ENCODE measurements at regions of chr20 and their contacts with region 1.

Region 1: DNA sequence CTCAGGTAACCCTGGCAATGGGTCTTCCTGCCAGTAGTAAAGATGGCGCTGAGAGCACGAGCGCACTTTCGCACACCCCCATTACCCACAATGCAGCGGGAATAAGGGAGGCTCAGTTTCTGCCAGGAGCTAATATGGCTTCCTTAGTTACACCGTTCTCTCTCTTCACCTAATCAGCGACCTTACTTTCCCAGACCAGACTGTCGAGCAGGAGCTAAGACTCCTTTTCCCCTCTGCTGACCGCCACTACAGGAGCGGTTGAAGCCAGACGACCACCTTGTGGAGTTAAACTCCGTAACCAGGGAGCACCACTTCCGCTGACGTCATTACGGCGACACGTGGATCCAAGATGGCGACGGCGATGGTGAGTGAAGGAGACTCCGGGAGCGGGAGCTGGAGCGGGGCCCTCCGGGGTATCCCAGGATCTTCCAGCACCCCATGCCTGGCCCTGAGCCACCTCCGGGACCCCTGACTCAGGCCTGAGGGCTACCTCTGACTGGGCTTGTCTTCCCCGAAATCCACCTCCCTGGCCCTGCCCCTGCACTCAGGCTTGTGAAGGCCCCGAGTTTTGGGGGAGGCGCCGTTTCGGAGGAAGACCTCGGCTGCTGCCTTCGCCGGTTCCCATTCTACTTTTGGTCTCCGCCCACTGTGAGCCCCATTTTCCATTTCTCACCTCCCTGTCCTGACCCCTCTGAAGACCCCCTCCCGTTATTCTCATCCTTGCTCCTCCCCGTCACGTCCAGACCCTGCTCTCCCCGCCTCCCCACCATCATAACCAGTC is at the start of gene TM9SF4:
- DNase-seq: peak; percentile 87 to 96 (median 93)
- ATAC-seq: peak; percentile 92
- H3K4me3 ChIP-seq: peak within 1 kb of the TSS; percentile 92
- H3K4me3 Mint-ChIP-seq: peak within 1 kb of the TSS; percentile 78 to 100 (median 96)
- H3K27ac ChIP-seq: peak within 1 kb of the TSS; percentile 94
- H3K27ac Mint-ChIP-seq: peak within 1 kb of the TSS; percentile 95 to 100 (median 100)
- H3K4me1 ChIP-seq: peaks cover 11% of the 10 kb centered on the region in 2 donors
- H3K4me1 Mint-ChIP-seq: peaks cover 26 to 44% (median 39%) of the 10 kb centered on the region in 7 donors
- H3K27me3 ChIP-seq: no peaks in the 10 kb centered on the region
- H3K27me3 Mint-ChIP-seq: no peaks in the 10 kb centered on the region
- total RNA-seq, gene TM9SF4: 35.2 to 61.0 (median 41.5) TPM

Region 2: GRCh38 chr20:30892541-30893345 is 1216.8 kb before region 1 on chr20:
- CTCF ChIA-PET with region 1: no interaction called
- POLR2A ChIA-PET with region 1: no interaction called
- intact Hi-C with region 1: no loop called
- DNase-seq: no peak
- ATAC-seq: no peak
- H3K4me3 ChIP-seq: no peak overlapping the region
- H3K4me3 Mint-ChIP-seq: no peak overlapping the region
- H3K27ac ChIP-seq: no peak overlapping the region
- H3K27ac Mint-ChIP-seq: no peak overlapping the region
- H3K4me1 ChIP-seq: no peaks in the 10 kb centered on the region
- H3K4me1 Mint-ChIP-seq: peaks cover 0 to 2% (median 0%) of the 10 kb centered on the region in 7 donors
- H3K27me3 ChIP-seq: no peaks in the 10 kb centered on the region
- H3K27me3 Mint-ChIP-seq: peaks cover 14 to 41% (median 27%) of the 10 kb centered on the region in 5 donors

Region 3: GRCh38 chr20:31879143-31879987 is 230.2 kb before region 1 on chr20:
- CTCF ChIA-PET with region 1: no interaction called
- POLR2A ChIA-PET with region 1: no interaction called
- intact Hi-C with region 1: loop called (anchors 1 kb)
- DNase-seq: peak; percentile 55 to 77 (median 71)
- ATAC-seq: peak; percentile 93
- H3K4me3 ChIP-seq: peak overlapping the region; percentile 68
- H3K4me3 Mint-ChIP-seq: peak overlapping the region; percentile 89 to 97 (median 94)
- H3K27ac ChIP-seq: peak overlapping the region; percentile 27
- H3K27ac Mint-ChIP-seq: peak overlapping the region; percentile 32 to 92 (median 79)
- H3K4me1 ChIP-seq: no peaks in the 10 kb centered on the region
- H3K4me1 Mint-ChIP-seq: peaks cover 6 to 17% (median 12%) of the 10 kb centered on the region in 7 donors
- H3K27me3 ChIP-seq: no peaks in the 10 kb centered on the region
- H3K27me3 Mint-ChIP-seq: peaks cover 0 to 53% (median under 1%) of the 10 kb centered on the region in 5 donors

Region 4: DNA sequence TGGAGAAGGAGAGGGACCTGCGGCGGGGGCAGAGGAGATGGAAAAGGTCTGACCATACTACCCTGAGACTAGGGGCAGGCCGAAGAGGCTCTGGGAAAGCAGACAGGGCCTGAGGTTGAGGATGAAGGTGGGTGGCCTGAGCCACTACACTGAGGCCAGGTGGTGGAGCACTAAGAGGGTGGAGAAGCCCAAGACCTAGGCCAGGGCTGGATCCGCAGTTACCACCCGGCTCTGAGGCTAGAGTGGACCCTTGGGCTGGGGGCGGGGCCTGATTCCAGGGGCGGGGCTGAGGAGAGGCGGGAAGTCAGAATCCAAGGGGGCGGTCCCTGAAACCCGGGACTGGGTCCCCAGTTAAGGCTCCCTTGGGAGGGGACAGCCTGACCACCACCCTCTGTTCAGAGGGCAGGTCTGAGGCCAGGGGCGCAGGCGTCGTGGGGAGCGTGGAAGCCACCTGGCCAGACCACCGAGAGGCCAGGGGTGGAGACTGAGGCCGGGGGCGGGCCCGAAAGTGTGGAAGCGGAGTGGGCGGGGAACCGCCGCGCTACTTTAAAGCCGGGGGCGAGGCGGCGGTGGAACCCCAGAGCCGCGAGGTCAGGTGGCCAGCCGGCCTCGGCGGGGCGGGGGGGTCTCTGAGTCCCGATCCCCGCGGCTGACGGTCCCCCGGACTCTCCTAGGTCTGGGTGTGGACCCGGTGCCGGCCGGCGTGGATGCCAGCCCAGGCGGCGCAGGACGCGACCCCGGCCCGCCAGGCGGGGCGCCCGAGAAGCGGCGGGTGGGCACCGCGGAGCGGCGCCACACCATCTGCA is 91.1 kb before region 1 on chr20:
- CTCF ChIA-PET with region 1: no interaction called
- POLR2A ChIA-PET with region 1: no interaction called
- intact Hi-C with region 1: loop called in 1 of 2 experiments (anchors 1 kb)
- DNase-seq: peak in 8 of 9 donors; percentile 17 to 59 (median 36)
- ATAC-seq: peak; percentile 61
- H3K4me3 ChIP-seq: peak overlapping the region; percentile 48
- H3K4me3 Mint-ChIP-seq: peak overlapping the region; percentile 54 to 91 (median 82)
- H3K27ac ChIP-seq: no peak overlapping the region
- H3K27ac Mint-ChIP-seq: no peak overlapping the region
- H3K4me1 ChIP-seq: peaks cover 0 to 6% of the 10 kb centered on the region in 2 donors
- H3K4me1 Mint-ChIP-seq: peaks cover 10 to 28% (median 23%) of the 10 kb centered on the region in 7 donors
- H3K27me3 ChIP-seq: peaks cover 0 to 3% of the 10 kb centered on the region in 2 donors
- H3K27me3 Mint-ChIP-seq: peaks cover 66 to 81% (median 70%) of the 10 kb centered on the region in 5 donors

Region 5: DNA sequence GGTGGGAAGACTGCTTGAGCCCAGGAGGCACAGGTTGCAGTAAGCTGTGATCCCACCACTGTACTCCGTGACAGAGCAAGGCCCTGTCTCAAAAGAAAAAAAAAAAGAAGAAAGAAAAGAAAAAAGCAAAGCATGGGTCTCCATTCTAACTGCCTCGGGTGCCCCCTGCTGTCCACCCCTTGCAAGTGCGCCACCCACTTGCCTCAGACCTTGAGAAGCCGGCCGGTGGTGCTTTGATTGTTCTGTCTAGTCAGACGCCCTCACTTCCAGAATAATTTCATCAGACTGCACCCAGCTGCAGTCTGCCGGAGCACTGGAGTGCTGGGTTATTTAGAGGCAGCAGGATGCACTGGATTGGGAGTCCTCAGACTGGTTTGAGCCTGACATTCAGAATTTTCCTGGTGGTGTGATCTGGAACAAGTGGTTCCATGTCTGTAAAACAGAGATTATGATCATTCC is 17.7 kb before region 1 on chr20:
- CTCF ChIA-PET with region 1: no interaction called
- POLR2A ChIA-PET with region 1: no interaction called
- intact Hi-C with region 1: no loop called
- DNase-seq: peak; percentile 47 to 73 (median 68)
- ATAC-seq: peak; percentile 96
- H3K4me3 ChIP-seq: no peak overlapping the region
- H3K4me3 Mint-ChIP-seq: no peak overlapping the region
- H3K27ac ChIP-seq: no peak overlapping the region
- H3K27ac Mint-ChIP-seq: peak overlapping the region in 1 of 9 donors; percentile 61
- H3K4me1 ChIP-seq: no peaks in the 10 kb centered on the region
- H3K4me1 Mint-ChIP-seq: peaks cover 0 to 6% (median 0%) of the 10 kb centered on the region in 7 donors
- H3K27me3 ChIP-seq: no peaks in the 10 kb centered on the region
- H3K27me3 Mint-ChIP-seq: peaks cover 0 to 26% (median 5%) of the 10 kb centered on the region in 5 donors

Measured in naive thymus-derived CD4-positive, alpha-beta T cell (primary cell).